Naive thymus-derived CD4-positive, alpha-beta T cell (primary cell): ENCODE measurements at regions of chr19 and their contacts with region 1.

Region 1: GRCh38 chr19:23686621-23687423 is at the start of gene ZNF675:
- DNase-seq: peak; percentile 68 to 90 (median 87)
- ATAC-seq: peak; percentile 95
- H3K4me3 ChIP-seq: peak within 1 kb of the TSS; percentile 94
- H3K4me3 Mint-ChIP-seq: peak within 1 kb of the TSS; percentile 96 to 99 (median 98)
- H3K27ac ChIP-seq: peak within 1 kb of the TSS; percentile 95
- H3K27ac Mint-ChIP-seq: peak within 1 kb of the TSS; percentile 96 to 99 (median 98)
- H3K4me1 ChIP-seq: peaks cover 9 to 30% of the 10 kb centered on the region in 2 donors
- H3K4me1 Mint-ChIP-seq: peaks cover 14 to 59% (median 50%) of the 10 kb centered on the region in 7 donors
- H3K27me3 ChIP-seq: no peaks in the 10 kb centered on the region
- H3K27me3 Mint-ChIP-seq: no peaks in the 10 kb centered on the region
- total RNA-seq, gene ZNF675: 17.5 to 39.6 (median 24.0) TPM

Region 2: GRCh38 chr19:23116802-23117571 is 569.8 kb before region 1 on chr19 and contains the start of gene ZNF730:
- CTCF ChIA-PET with region 1: no interaction called
- POLR2A ChIA-PET with region 1: no interaction called
- intact Hi-C with region 1: no loop called
- DNase-seq: peak in 8 of 9 donors; percentile 5 to 50 (median 18)
- ATAC-seq: peak; percentile 96
- H3K4me3 ChIP-seq: no peak within 1 kb of the TSS
- H3K4me3 Mint-ChIP-seq: peak within 1 kb of the TSS; percentile 41 to 85 (median 76)
- H3K27ac ChIP-seq: no peak within 1 kb of the TSS
- H3K27ac Mint-ChIP-seq: peak within 1 kb of the TSS in 2 of 9 donors; percentile 29 to 64
- H3K4me1 ChIP-seq: no peaks in the 10 kb centered on the region
- H3K4me1 Mint-ChIP-seq: peaks cover 0 to 15% (median 2%) of the 10 kb centered on the region in 7 donors
- H3K27me3 ChIP-seq: no peaks in the 10 kb centered on the region
- H3K27me3 Mint-ChIP-seq: peaks cover 0 to 41% (median 32%) of the 10 kb centered on the region in 5 donors
- total RNA-seq, gene ZNF730: 0.69 to 0.80 TPM in 2 of 5 experiments, not detected in the others

Region 3: GRCh38 chr19:23249911-23250649 is 436.7 kb before region 1 on chr19 and contains the start of gene ZNF724:
- CTCF ChIA-PET with region 1: no interaction called
- POLR2A ChIA-PET with region 1: interaction called, 5 read pairs
- intact Hi-C with region 1: loop called (anchors 1 kb)
- DNase-seq: peak; percentile 66 to 91 (median 88)
- ATAC-seq: peak; percentile 100
- H3K4me3 ChIP-seq: peak within 1 kb of the TSS; percentile 84
- H3K4me3 Mint-ChIP-seq: peak within 1 kb of the TSS; percentile 95 to 99 (median 96)
- H3K27ac ChIP-seq: peak within 1 kb of the TSS; percentile 72
- H3K27ac Mint-ChIP-seq: peak within 1 kb of the TSS; percentile 61 to 96 (median 89)
- H3K4me1 ChIP-seq: peaks cover 0 to 6% of the 10 kb centered on the region in 2 donors
- H3K4me1 Mint-ChIP-seq: peaks cover 6 to 22% (median 10%) of the 10 kb centered on the region in 7 donors
- H3K27me3 ChIP-seq: no peaks in the 10 kb centered on the region
- H3K27me3 Mint-ChIP-seq: no peaks in the 10 kb centered on the region
- total RNA-seq, gene ZNF724: 2.9 to 11.3 (median 6.8) TPM

Region 4: GRCh38 chr19:23263870-23264590 is 422.8 kb before region 1 on chr19:
- CTCF ChIA-PET with region 1: no interaction called
- POLR2A ChIA-PET with region 1: no interaction called
- intact Hi-C with region 1: no loop called
- DNase-seq: no peak
- ATAC-seq: no peak
- H3K4me3 ChIP-seq: no peak overlapping the region
- H3K4me3 Mint-ChIP-seq: no peak overlapping the region
- H3K27ac ChIP-seq: no peak overlapping the region
- H3K27ac Mint-ChIP-seq: peak overlapping the region in 2 of 9 donors; percentile 14 to 32
- H3K4me1 ChIP-seq: no peaks in the 10 kb centered on the region
- H3K4me1 Mint-ChIP-seq: peaks cover 0 to 6% (median 2%) of the 10 kb centered on the region in 7 donors
- H3K27me3 ChIP-seq: no peaks in the 10 kb centered on the region
- H3K27me3 Mint-ChIP-seq: no peaks in the 10 kb centered on the region

Region 5: DNA sequence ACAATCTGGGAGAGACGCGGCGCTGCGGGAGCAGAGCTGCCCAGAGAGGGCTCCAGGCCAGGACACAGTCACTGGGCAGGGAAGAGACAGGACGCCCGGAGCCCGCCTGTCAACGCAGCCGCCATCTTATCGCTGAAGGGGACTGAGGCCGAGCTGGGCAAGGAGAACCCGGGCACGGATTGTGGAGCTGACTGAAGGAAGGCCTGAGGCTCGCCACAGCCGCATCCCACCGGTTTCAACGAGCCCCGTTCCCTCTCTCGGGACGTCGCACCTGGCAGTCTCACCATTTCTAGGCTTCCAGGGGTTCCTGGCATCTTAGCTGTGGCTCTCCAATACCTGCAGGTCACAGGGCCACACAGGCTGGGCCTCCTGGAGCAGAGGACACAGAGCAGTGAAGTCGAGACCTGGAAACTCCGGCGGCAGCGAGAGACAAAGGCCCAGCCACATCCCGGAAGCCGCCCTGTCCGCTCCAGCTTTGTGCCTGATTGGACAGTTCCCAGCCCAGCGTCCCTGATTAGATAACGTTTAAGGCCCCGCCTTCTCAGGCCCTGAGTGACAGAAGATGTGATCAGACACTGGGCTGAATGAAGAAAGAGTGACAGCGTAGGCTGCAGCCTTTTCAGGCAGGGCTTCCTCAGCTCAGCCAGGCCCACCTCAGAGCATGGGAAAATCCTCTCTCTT is 291.6 kb before region 1 on chr19 and contains the start of gene ZNF91:
- CTCF ChIA-PET with region 1: no interaction called
- POLR2A ChIA-PET with region 1: interaction called, 10 read pairs
- intact Hi-C with region 1: loop called (anchors 1 kb)
- DNase-seq: peak; percentile 73 to 96 (median 92)
- ATAC-seq: peak; percentile 98
- H3K4me3 ChIP-seq: peak within 1 kb of the TSS; percentile 96
- H3K4me3 Mint-ChIP-seq: peak within 1 kb of the TSS; percentile 96 to 99 (median 98)
- H3K27ac ChIP-seq: peak within 1 kb of the TSS; percentile 96
- H3K27ac Mint-ChIP-seq: peak within 1 kb of the TSS; percentile 94 to 99 (median 98)
- H3K4me1 ChIP-seq: peaks cover 12% of the 10 kb centered on the region in 2 donors
- H3K4me1 Mint-ChIP-seq: peaks cover 4 to 43% (median 37%) of the 10 kb centered on the region in 7 donors
- H3K27me3 ChIP-seq: no peaks in the 10 kb centered on the region
- H3K27me3 Mint-ChIP-seq: no peaks in the 10 kb centered on the region
- total RNA-seq, gene ZNF91: 40.5 to 165 (median 90.6) TPM

Region 6: GRCh38 chr19:23799321-23799720 is 112.5 kb after region 1 on chr19:
- CTCF ChIA-PET with region 1: interaction called, 3 read pairs
- POLR2A ChIA-PET with region 1: interaction called, 7 read pairs
- intact Hi-C with region 1: loop called (anchors 1 to 5 kb)
- DNase-seq: peak in 7 of 9 donors; percentile 46 to 66 (median 61)
- ATAC-seq: peak; percentile 92
- H3K4me3 ChIP-seq: peak overlapping the region; percentile 31
- H3K4me3 Mint-ChIP-seq: peak overlapping the region; percentile 77 to 91 (median 84)
- H3K27ac ChIP-seq: peak overlapping the region; percentile 67
- H3K27ac Mint-ChIP-seq: peak overlapping the region; percentile 84 to 97 (median 92)
- H3K4me1 ChIP-seq: peaks cover 6% of the 10 kb centered on the region in 2 donors
- H3K4me1 Mint-ChIP-seq: peaks cover 10 to 49% (median 34%) of the 10 kb centered on the region in 7 donors
- H3K27me3 ChIP-seq: no peaks in the 10 kb centered on the region
- H3K27me3 Mint-ChIP-seq: no peaks in the 10 kb centered on the region

Region 7: DNA sequence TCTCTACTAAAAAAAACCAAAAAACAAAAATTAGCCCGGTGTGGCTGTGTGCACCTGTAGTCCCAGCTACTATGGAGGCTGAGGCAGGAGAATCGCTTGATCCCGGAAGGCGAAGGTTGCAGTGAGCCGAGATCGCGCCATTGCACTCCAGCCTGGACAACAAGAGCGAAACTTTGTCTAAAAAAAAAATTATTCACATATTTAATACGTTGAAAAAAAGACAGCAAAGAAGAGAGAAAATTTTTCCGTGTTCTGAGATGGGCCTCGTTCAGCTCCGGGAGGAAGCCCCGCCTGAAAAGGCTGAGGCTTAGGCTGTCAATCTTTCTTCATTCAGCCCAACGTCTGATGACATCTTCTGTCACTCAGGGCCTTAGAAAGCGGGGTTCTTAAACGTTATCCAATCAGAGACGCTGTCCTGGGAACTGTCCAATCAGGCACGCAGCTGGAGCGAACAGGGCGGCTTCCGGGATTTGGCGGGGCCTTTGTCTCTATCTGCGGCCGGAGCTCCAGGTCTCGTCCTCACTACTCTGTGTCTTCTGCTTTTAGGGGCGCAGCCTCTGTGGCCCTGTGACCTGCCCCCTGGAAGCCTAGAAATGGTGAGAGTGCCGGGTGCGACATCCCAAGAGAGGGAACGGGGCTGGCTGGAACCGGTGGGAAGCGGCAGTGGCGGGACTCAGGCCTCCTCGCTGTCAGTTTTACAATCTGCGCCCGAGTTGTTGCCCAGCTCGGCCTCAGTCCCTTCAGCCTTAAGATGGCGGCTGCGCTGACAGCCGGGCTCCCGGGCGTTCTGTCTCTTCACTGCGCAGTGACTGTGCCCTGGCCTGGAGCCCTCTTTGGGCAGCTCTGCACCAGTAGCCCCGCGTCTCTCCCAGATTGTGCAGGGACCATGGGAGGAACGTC is 227.8 kb after region 1 on chr19 and contains the start of gene ZNF726:
- CTCF ChIA-PET with region 1: no interaction called
- POLR2A ChIA-PET with region 1: interaction called, 4 read pairs
- intact Hi-C with region 1: loop called (anchors 1 to 2 kb)
- DNase-seq: peak; percentile 66 to 91 (median 87)
- ATAC-seq: peak; percentile 99
- H3K4me3 ChIP-seq: peak within 1 kb of the TSS; percentile 61
- H3K4me3 Mint-ChIP-seq: peak within 1 kb of the TSS; percentile 90 to 97 (median 94)
- H3K27ac ChIP-seq: peak within 1 kb of the TSS; percentile 68
- H3K27ac Mint-ChIP-seq: peak within 1 kb of the TSS; percentile 69 to 96 (median 91)
- H3K4me1 ChIP-seq: peaks cover 0 to 3% of the 10 kb centered on the region in 2 donors
- H3K4me1 Mint-ChIP-seq: peaks cover 0 to 30% (median 14%) of the 10 kb centered on the region in 7 donors
- H3K27me3 ChIP-seq: no peaks in the 10 kb centered on the region
- H3K27me3 Mint-ChIP-seq: no peaks in the 10 kb centered on the region
- total RNA-seq, gene ZNF726: 3.3 to 6.8 (median 4.0) TPM